Calu3 (cell line): ENCODE measurements at regions of chr20 and their contacts with region 1.

Region 1: DNA sequence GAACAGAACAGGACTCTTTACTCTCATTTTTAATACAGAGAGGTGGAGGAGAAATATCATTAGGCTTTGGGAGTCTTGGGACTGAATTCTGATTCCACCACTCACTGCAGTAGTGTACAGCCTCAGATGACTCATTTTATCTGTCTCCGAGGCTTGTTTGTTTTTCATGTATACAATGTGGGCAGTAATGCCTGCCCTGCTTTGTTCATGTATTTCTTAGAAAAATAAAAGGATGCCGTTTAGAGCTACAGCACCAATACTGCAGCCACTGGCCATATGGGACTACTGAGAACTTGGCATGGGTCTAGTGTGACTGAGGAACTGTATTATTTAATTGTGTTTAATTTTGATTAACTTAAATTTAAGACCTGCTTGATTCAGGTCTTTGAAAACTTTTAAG is 41.2 kb upstream of the JAG1 start:
- DNase-seq: no peak
- H3K4me3 Mint-ChIP-seq: no peak overlapping the region
- H3K27ac Mint-ChIP-seq: peak overlapping the region; percentile 16
- H3K4me1 Mint-ChIP-seq: peaks cover 60% of the 10 kb centered on the region
- H3K27me3 Mint-ChIP-seq: no peaks in the 10 kb centered on the region
- CTCF ChIP-seq: no peak

Region 2: GRCh38 chr20:10434832-10435812 is 279.9 kb before region 1 on chr20 and contains the start of gene SLX4IP:
- CTCF ChIA-PET with region 1: no interaction called
- intact Hi-C with region 1: loop called (anchors 5 kb)
- DNase-seq: peak; percentile 80
- H3K4me3 Mint-ChIP-seq: peak within 1 kb of the TSS; percentile 90
- H3K27ac Mint-ChIP-seq: peak within 1 kb of the TSS; percentile 78
- H3K4me1 Mint-ChIP-seq: peaks cover 27% of the 10 kb centered on the region
- H3K27me3 Mint-ChIP-seq: no peaks in the 10 kb centered on the region
- CTCF ChIP-seq: no peak
- total RNA-seq, gene SLX4IP: 5.4 and 6.4 TPM in 2 replicates